ENCODE measurements at regions of chr11 and their contacts with region 1.

Region 1: DNA sequence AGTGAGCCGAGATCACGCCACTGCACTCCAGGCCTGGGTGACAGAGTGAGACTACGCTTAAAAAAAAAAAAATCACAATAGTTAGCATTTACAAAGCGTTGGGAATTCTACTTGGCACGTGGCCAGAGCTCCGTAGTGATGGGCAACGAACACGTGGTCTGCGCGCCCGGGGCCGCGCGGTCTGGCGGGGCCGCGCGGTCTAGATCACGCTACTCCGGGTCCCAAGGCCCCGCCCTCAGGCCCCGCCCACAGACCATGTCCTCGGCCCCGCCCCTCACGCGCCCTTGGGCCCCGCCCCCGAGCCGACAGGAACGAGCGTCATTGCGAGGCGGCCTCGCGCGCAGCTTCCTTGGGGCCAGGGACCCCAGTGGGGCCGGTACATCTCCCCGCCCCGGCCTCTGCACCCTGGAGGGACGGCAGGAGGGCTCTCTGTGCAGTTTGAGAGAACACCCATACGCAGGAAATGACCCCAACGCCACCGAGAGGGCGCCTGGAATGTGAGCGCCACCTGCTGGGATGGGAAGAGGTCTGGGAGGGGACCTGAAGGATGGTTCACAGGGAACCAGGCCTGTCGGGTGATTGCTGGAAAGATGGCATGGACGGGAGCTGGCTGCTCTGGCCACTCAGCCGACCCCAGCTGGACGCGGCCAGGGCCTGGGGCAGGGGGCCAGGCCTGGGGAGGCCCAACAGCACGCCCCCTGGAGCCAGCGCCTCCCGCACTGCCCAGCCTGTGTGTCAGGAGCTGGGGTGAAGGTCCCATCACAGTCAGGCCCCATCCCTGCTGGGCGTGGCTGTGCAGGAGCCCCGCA is 2.0 kb upstream of the PTDSS2 start:
- DNase-seq: peak; percentile 92 to 97 (median 94)
- ATAC-seq: peak; percentile 74
- H3K4me3 ChIP-seq: peak overlapping the region; percentile 43 to 69
- H3K4me3 Mint-ChIP-seq: peak overlapping the region; percentile 86
- H3K27ac ChIP-seq: peak overlapping the region; percentile 73 to 94
- H3K27ac Mint-ChIP-seq: peak overlapping the region; percentile 94
- H3K4me1 ChIP-seq: peaks cover 29% of the 10 kb centered on the region
- H3K4me1 Mint-ChIP-seq: peaks cover 19% of the 10 kb centered on the region
- H3K27me3 ChIP-seq: peaks cover 0 to 2% of the 10 kb centered on the region in 2 experiments
- H3K27me3 Mint-ChIP-seq: no peaks in the 10 kb centered on the region
- CTCF ChIP-seq: peak; percentile 68

Region 2: DNA sequence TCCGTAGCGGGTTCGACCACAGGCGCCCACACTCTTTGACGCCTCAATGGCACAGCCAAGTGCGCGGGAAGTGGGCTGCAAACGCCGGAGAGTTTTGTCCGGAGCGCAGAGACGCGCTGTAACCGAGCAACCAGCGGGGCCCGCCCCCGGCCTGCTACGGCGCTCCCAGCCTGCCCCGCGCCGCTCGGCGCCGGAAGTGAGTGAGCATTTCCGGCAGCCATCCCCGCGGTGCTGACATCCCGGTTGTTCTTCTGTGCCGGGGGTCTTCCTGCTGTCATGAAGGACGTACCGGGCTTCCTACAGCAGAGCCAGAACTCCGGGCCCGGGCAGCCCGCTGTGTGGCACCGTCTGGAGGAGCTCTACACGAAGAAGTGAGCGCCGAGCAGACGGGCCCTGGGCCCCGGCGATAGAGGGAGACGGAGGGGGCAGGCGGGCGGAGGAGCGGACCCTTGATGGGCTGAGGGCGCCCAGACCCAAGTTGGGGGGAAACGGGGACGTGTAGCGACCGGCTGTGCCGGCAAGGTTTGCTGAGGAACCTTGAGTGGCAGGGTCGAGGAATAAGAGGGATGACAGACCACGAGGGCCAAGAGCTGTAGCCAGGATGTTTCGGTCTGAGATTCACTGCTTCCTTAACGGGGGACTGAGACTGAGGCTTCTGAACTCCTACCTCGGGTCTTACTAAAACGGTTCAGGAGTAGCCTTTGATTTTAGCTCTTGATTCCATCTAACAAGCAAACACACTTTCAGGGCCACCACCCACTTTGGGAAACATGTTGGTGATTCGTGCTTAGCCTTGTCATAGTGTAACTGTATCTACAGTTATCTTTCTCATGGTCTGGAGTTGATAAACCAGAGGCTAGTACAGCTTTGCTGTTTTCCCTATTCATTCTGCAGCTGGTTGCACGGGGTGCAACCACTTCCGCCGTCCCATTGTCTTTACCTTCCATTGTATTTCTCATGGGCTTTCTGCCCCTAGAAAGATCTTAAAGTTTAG is 211.1 kb before region 1 on chr11 and contains the start of gene PSMD13:
- CTCF ChIA-PET with region 1: interaction called, 5 read pairs
- POLR2A ChIA-PET with region 1: no interaction called
- intact Hi-C with region 1: loop called (anchors 1 kb)
- DNase-seq: peak; percentile 74 to 94 (median 88)
- ATAC-seq: peak; percentile 72
- H3K4me3 ChIP-seq: peak within 1 kb of the TSS; percentile 83 to 100
- H3K4me3 Mint-ChIP-seq: peak within 1 kb of the TSS; percentile 96
- H3K27ac ChIP-seq: peak within 1 kb of the TSS; percentile 99 to 100
- H3K27ac Mint-ChIP-seq: peak within 1 kb of the TSS; percentile 99
- H3K4me1 ChIP-seq: peaks cover 24% of the 10 kb centered on the region
- H3K4me1 Mint-ChIP-seq: peaks cover 59% of the 10 kb centered on the region
- H3K27me3 ChIP-seq: no peaks in the 10 kb centered on the region
- H3K27me3 Mint-ChIP-seq: no peaks in the 10 kb centered on the region
- CTCF ChIP-seq: no peak
- total RNA-seq, gene PSMD13: 74.3 to 82.8 TPM

Region 3: DNA sequence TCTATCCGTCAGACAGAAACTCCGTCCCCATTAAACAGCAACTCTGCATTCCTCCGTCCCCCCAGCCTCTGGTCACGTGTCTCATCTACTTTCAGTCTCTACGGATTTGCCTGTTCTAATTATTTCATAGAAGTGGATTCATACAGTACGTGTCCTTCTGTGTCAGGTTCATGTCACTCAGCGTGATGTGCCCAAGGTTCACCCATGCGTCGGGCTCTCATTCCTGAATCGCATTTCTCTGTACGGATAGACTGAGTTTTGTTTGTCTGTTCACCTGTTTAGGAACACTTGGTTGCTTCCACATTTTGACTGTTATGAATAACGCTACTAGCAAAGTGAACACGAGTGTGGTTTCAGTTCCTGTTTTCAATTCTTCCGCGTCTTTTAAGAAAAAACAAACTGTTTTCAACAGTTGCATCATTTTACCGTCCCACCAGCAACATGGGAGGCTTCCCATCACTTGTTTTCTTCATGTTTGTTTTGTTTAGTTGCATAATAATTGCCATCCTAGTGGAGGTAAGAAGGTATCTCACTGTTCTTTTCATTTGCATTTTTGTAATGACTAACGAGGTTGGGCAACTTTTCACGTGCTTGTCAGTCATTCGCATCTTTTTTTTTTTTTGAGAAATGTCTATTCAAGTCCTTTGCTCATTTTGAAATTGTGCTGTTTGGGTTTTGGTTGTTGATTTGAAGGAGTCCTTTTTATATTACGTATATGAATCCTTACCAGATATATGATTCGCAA is 178.8 kb before region 1 on chr11:
- CTCF ChIA-PET with region 1: no interaction called
- POLR2A ChIA-PET with region 1: interaction called, 10 read pairs
- intact Hi-C with region 1: no loop called
- DNase-seq: peak in 5 of 9 experiments; percentile 60 to 90 (median 77)
- ATAC-seq: peak; percentile 69
- H3K4me3 ChIP-seq: peak overlapping the region; percentile 38 to 60
- H3K4me3 Mint-ChIP-seq: peak overlapping the region; percentile 85
- H3K27ac ChIP-seq: peak overlapping the region; percentile 76 to 96
- H3K27ac Mint-ChIP-seq: peak overlapping the region; percentile 98
- H3K4me1 ChIP-seq: peaks cover 23% of the 10 kb centered on the region
- H3K4me1 Mint-ChIP-seq: peaks cover 30% of the 10 kb centered on the region
- H3K27me3 ChIP-seq: no peaks in the 10 kb centered on the region
- H3K27me3 Mint-ChIP-seq: no peaks in the 10 kb centered on the region
- CTCF ChIP-seq: no peak

Region 4: DNA sequence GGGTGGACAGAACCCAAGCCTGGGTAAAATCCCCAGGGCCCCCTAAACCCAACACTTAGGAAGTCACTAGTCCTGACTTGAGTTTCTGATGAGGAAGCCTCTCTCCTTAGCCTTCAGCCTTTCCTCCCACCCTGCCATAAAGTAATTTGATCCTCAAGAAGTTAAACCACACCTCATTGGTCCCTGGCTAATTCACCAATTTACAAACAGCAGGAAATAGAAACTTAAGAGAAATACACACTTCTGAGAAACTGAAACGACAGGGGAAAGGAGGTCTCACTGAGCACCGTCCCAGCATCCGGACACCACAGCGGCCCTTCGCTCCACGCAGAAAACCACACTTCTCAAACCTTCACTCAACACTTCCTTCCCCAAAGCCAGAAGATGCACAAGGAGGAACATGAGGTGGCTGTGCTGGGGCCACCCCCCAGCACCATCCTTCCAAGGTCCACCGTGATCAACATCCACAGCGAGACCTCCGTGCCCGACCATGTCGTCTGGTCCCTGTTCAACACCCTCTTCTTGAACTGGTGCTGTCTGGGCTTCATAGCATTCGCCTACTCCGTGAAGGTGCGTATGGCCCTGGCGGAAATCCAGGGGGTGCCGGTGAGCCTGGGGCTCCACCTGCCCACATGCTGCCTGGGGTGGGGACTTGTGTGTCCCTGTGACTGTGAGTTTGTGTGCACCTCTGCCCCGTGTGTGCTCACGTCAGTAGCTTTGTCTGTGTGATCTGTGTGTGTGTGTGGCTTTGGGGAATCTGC is 134.2 kb before region 1 on chr11 and contains the start of gene IFITM1:
- CTCF ChIA-PET with region 1: interaction called, 17 read pairs
- POLR2A ChIA-PET with region 1: no interaction called
- intact Hi-C with region 1: no loop called
- DNase-seq: peak in 7 of 9 experiments; percentile 54 to 86 (median 71)
- ATAC-seq: peak; percentile 49
- H3K4me3 ChIP-seq: peak within 1 kb of the TSS; percentile 95 to 97
- H3K4me3 Mint-ChIP-seq: peak within 1 kb of the TSS; percentile 95
- H3K27ac ChIP-seq: peak within 1 kb of the TSS; percentile 83 to 88
- H3K27ac Mint-ChIP-seq: peak within 1 kb of the TSS; percentile 98
- H3K4me1 ChIP-seq: peaks cover 18% of the 10 kb centered on the region
- H3K4me1 Mint-ChIP-seq: peaks cover 45% of the 10 kb centered on the region
- H3K27me3 ChIP-seq: no peaks in the 10 kb centered on the region
- H3K27me3 Mint-ChIP-seq: no peaks in the 10 kb centered on the region
- CTCF ChIP-seq: no peak
- total RNA-seq, gene IFITM1: 223 to 251 TPM

Region 5: GRCh38 chr11:406978-407739 is 41.0 kb before region 1 on chr11:
- CTCF ChIA-PET with region 1: interaction called, 68 read pairs
- POLR2A ChIA-PET with region 1: interaction called, 62 read pairs
- intact Hi-C with region 1: loop called (anchors 1 to 2 kb)
- DNase-seq: peak; percentile 89 to 99 (median 94)
- ATAC-seq: peak; percentile 86
- H3K4me3 ChIP-seq: peak overlapping the region in 1 of 2 experiments; percentile 19
- H3K4me3 Mint-ChIP-seq: no peak overlapping the region
- H3K27ac ChIP-seq: peak overlapping the region; percentile 46 to 73
- H3K27ac Mint-ChIP-seq: peak overlapping the region; percentile 82
- H3K4me1 ChIP-seq: peaks cover 25% of the 10 kb centered on the region
- H3K4me1 Mint-ChIP-seq: peaks cover 17% of the 10 kb centered on the region
- H3K27me3 ChIP-seq: no peaks in the 10 kb centered on the region
- H3K27me3 Mint-ChIP-seq: no peaks in the 10 kb centered on the region
- CTCF ChIP-seq: no peak

Region 6: DNA sequence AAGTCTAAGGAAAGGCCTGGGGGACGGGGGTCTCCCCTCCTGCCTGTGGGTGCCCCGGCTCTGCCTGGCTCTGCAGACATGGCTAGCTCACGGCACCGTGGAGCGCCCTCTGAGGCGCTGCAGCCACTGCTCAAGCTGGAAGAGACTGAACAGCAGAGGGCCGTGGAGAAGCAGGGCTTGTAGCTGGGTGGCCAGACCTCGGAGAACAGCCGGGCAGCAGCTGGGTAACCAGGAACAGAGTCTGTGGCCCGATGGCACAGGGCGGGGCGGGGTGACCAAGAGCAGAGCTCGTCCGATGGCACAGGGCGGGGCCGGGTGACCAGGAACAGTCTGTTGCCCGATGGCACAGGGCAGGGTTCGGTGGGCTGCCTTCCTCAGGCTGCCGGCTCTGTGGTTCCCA is 40.9 kb after region 1 on chr11:
- CTCF ChIA-PET with region 1: no interaction called
- POLR2A ChIA-PET with region 1: no interaction called
- intact Hi-C with region 1: no loop called
- DNase-seq: no peak
- ATAC-seq: no peak
- H3K4me3 ChIP-seq: no peak overlapping the region
- H3K4me3 Mint-ChIP-seq: no peak overlapping the region
- H3K27ac ChIP-seq: no peak overlapping the region
- H3K27ac Mint-ChIP-seq: no peak overlapping the region
- H3K4me1 ChIP-seq: no peaks in the 10 kb centered on the region
- H3K4me1 Mint-ChIP-seq: no peaks in the 10 kb centered on the region
- H3K27me3 ChIP-seq: no peaks in the 10 kb centered on the region
- H3K27me3 Mint-ChIP-seq: no peaks in the 10 kb centered on the region
- CTCF ChIP-seq: no peak

Region 7: GRCh38 chr11:506238-506994 is 58.3 kb after region 1 on chr11:
- CTCF ChIA-PET with region 1: interaction called, 15 read pairs
- POLR2A ChIA-PET with region 1: interaction called, 15 read pairs
- intact Hi-C with region 1: loop called (anchors 1 kb)
- DNase-seq: peak; percentile 93 to 99 (median 98)
- ATAC-seq: peak; percentile 67
- H3K4me3 ChIP-seq: peak overlapping the region; percentile 93 to 99
- H3K4me3 Mint-ChIP-seq: peak overlapping the region; percentile 97
- H3K27ac ChIP-seq: peak overlapping the region; percentile 99 to 100
- H3K27ac Mint-ChIP-seq: peak overlapping the region; percentile 99
- H3K4me1 ChIP-seq: peaks cover 36% of the 10 kb centered on the region
- H3K4me1 Mint-ChIP-seq: peaks cover 25% of the 10 kb centered on the region
- H3K27me3 ChIP-seq: no peaks in the 10 kb centered on the region
- H3K27me3 Mint-ChIP-seq: no peaks in the 10 kb centered on the region
- CTCF ChIP-seq: no peak

Region 8: GRCh38 chr11:925496-926321 is 477.6 kb after region 1 on chr11 and contains the start of gene AP2A2:
- CTCF ChIA-PET with region 1: no interaction called
- POLR2A ChIA-PET with region 1: no interaction called
- intact Hi-C with region 1: loop called in 1 of 2 experiments (anchors 10 kb)
- DNase-seq: peak; percentile 76 to 96 (median 92)
- ATAC-seq: peak; percentile 72
- H3K4me3 ChIP-seq: peak within 1 kb of the TSS; percentile 48 to 70
- H3K4me3 Mint-ChIP-seq: peak within 1 kb of the TSS; percentile 82
- H3K27ac ChIP-seq: peak within 1 kb of the TSS; percentile 37 to 67
- H3K27ac Mint-ChIP-seq: peak within 1 kb of the TSS; percentile 88
- H3K4me1 ChIP-seq: peaks cover 41% of the 10 kb centered on the region
- H3K4me1 Mint-ChIP-seq: peaks cover 32% of the 10 kb centered on the region
- H3K27me3 ChIP-seq: no peaks in the 10 kb centered on the region
- H3K27me3 Mint-ChIP-seq: no peaks in the 10 kb centered on the region
- CTCF ChIP-seq: peak; percentile 67
- total RNA-seq, gene AP2A2: 38.6 to 44.3 TPM

Region 9: DNA sequence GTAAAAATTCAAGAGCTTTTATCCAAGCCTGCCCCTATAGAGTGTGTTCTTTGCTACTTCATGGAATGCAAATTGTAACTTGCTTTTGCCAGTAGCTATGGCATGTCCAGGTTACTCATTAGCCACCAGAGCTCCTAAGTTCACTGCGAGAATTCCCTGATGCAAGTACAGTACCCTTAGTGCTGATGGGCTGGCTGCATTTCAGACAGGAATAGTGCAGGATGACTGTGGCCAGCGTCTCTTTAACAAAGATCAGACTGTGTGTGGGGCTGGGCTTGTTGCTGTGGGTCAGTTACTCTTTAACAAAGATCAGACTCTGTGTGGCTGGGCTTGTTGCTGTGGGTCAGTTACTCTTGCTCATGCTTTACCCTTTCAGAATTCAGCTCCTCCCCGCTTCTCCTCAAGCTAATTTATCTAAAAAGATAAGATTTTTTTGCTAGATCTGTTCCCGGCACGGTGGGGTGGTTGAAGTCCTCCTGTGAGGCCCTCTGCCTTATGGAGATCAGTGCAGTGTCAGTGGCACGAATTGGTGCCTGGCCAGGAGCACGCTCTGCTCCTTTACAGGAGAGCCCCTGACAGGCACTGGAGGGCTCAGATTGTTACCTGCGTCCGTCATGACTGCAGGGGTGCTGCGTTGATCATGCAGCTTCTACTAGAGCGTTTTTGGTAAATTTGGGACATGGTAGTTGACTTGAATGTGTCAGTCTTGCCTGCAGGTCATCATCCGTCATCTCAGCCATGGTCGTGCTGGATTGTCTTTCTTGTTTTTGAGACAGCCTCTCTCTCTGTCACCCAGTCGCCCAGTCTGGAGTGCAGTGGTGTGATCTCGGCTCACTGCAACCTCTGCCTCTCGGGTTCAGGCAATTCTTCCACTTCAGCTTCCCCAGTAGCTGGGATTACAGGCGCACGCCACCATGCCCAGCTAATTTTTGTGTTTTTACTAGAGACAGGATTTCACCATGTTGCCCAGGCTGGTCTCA is 504.6 kb after region 1 on chr11:
- CTCF ChIA-PET with region 1: no interaction called
- POLR2A ChIA-PET with region 1: no interaction called
- intact Hi-C with region 1: no loop called
- DNase-seq: no peak
- ATAC-seq: no peak
- H3K4me3 ChIP-seq: no peak overlapping the region
- H3K4me3 Mint-ChIP-seq: no peak overlapping the region
- H3K27ac ChIP-seq: no peak overlapping the region
- H3K27ac Mint-ChIP-seq: no peak overlapping the region
- H3K4me1 ChIP-seq: peaks cover 11% of the 10 kb centered on the region
- H3K4me1 Mint-ChIP-seq: peaks cover 28% of the 10 kb centered on the region
- H3K27me3 ChIP-seq: no peaks in the 10 kb centered on the region
- H3K27me3 Mint-ChIP-seq: no peaks in the 10 kb centered on the region
- CTCF ChIP-seq: no peak